WTC11 (cell line): ENCODE measurements at regions of chr16 and their contacts with region 1.

Region 1: GRCh38 chr16:85491058-85491771 is 121.9 kb upstream of the GSE1 start:
- DNase-seq: peak; percentile 78
- ATAC-seq: peak; percentile 66
- H3K4me3 Mint-ChIP-seq: no peak overlapping the region
- H3K27ac Mint-ChIP-seq: peak overlapping the region; percentile 90
- H3K4me1 Mint-ChIP-seq: peaks cover 17% of the 10 kb centered on the region
- H3K27me3 Mint-ChIP-seq: no peaks in the 10 kb centered on the region
- CTCF ChIP-seq: peak; percentile 86

Region 2: DNA sequence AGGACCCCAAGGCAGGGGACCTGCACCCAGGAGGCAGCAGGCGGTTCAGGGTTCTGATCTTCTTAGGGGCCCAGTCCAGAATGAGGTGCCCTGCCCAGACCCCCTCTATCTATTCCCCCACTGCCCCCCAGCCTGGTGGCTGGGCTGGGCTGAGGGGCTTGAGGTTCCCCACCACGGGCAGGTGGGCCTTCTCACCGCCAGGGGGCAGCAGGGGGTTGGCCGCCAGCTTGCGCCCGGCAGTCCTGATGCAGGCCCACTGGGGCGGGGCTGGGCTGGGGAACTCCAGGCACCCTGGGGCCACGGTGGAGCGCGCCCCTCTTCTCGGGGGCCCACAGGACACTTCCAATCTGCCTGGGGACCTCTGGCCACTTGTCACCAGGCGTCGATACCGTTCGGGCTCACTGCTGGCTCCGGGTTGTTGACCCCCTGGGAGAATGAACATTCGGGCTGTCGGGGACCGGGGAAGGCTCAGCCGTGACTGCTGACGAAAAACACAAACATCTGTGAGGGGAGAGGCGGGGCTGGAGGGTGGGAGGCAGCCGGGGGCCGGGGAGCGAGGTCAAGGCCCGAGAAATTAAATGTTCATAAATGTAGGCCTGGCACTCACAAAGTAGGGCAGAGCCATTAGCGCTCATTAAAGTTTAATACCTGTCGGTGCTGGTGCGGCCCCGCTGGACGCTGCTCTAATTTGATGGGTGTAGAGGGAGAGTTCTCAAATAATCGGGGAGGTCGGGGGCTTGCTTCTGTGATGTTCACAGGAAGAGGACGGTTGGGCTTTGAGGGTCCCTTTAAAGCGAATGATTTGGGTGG is 97.3 kb before region 1 on chr16:
- CTCF ChIA-PET with region 1: interaction called, 11 read pairs
- POLR2A ChIA-PET with region 1: no interaction called
- DNase-seq: peak; percentile 89
- ATAC-seq: peak; percentile 68
- H3K4me3 Mint-ChIP-seq: peak overlapping the region; percentile 38
- H3K27ac Mint-ChIP-seq: no peak overlapping the region
- H3K4me1 Mint-ChIP-seq: peaks cover 43% of the 10 kb centered on the region
- H3K27me3 Mint-ChIP-seq: no peaks in the 10 kb centered on the region
- CTCF ChIP-seq: peak; percentile 94

Region 3: GRCh38 chr16:85461814-85462713 is 29.2 kb before region 1 on chr16:
- CTCF ChIA-PET with region 1: interaction called, 29 read pairs
- POLR2A ChIA-PET with region 1: interaction called, 3 read pairs
- DNase-seq: peak; percentile 73
- ATAC-seq: peak; percentile 77
- H3K4me3 Mint-ChIP-seq: peak overlapping the region; percentile 76
- H3K27ac Mint-ChIP-seq: no peak overlapping the region
- H3K4me1 Mint-ChIP-seq: peaks cover 32% of the 10 kb centered on the region
- H3K27me3 Mint-ChIP-seq: peaks cover 60% of the 10 kb centered on the region
- CTCF ChIP-seq: no peak

Region 4: GRCh38 chr16:85505794-85506633 is 14.8 kb after region 1 on chr16:
- CTCF ChIA-PET with region 1: interaction called, 25 read pairs
- POLR2A ChIA-PET with region 1: no interaction called
- DNase-seq: no peak
- ATAC-seq: no peak
- H3K4me3 Mint-ChIP-seq: no peak overlapping the region
- H3K27ac Mint-ChIP-seq: no peak overlapping the region
- H3K4me1 Mint-ChIP-seq: peaks cover 19% of the 10 kb centered on the region
- H3K27me3 Mint-ChIP-seq: no peaks in the 10 kb centered on the region
- CTCF ChIP-seq: no peak

Region 5: GRCh38 chr16:85554112-85554813 is 63.0 kb after region 1 on chr16:
- CTCF ChIA-PET with region 1: interaction called, 54 read pairs
- POLR2A ChIA-PET with region 1: no interaction called
- DNase-seq: no peak
- ATAC-seq: peak; percentile 4; the same call in 1 of the 2 replicates
- H3K4me3 Mint-ChIP-seq: peak overlapping the region; percentile 89
- H3K27ac Mint-ChIP-seq: peak overlapping the region; percentile 85
- H3K4me1 Mint-ChIP-seq: peaks cover 44% of the 10 kb centered on the region
- H3K27me3 Mint-ChIP-seq: peaks cover 8% of the 10 kb centered on the region
- CTCF ChIP-seq: no peak

Region 6: GRCh38 chr16:85626191-85626981 is 135.2 kb after region 1 on chr16:
- CTCF ChIA-PET with region 1: interaction called, 10 read pairs
- POLR2A ChIA-PET with region 1: interaction called, 3 read pairs
- DNase-seq: peak; percentile 64
- ATAC-seq: peak; percentile 50
- H3K4me3 Mint-ChIP-seq: peak overlapping the region; percentile 53
- H3K27ac Mint-ChIP-seq: peak overlapping the region; percentile 70
- H3K4me1 Mint-ChIP-seq: peaks cover 50% of the 10 kb centered on the region
- H3K27me3 Mint-ChIP-seq: no peaks in the 10 kb centered on the region
- CTCF ChIP-seq: no peak